Naive thymus-derived CD4-positive, alpha-beta T cell (primary cell): ENCODE measurements at regions of chr2 and their contacts with region 1.

Region 1: GRCh38 chr2:210002158-210003157 is at the start of gene RPE:
- DNase-seq: peak; percentile 93 to 97 (median 96)
- ATAC-seq: peak; percentile 100
- H3K4me3 ChIP-seq: peak within 1 kb of the TSS; percentile 98
- H3K4me3 Mint-ChIP-seq: peak within 1 kb of the TSS; percentile 88 to 97 (median 95)
- H3K27ac ChIP-seq: peak within 1 kb of the TSS; percentile 81
- H3K27ac Mint-ChIP-seq: peak within 1 kb of the TSS; percentile 85 to 99 (median 95)
- H3K4me1 ChIP-seq: peaks cover 20 to 34% of the 10 kb centered on the region in 2 donors
- H3K4me1 Mint-ChIP-seq: peaks cover 42 to 81% (median 64%) of the 10 kb centered on the region in 7 donors
- H3K27me3 ChIP-seq: no peaks in the 10 kb centered on the region
- H3K27me3 Mint-ChIP-seq: no peaks in the 10 kb centered on the region
- total RNA-seq, gene RPE: 15.9 to 47.3 (median 40.8) TPM

Region 2: GRCh38 chr2:208025037-208025813 is 1977.2 kb before region 1 on chr2 and contains the start of gene PLEKHM3:
- CTCF ChIA-PET with region 1: no interaction called
- POLR2A ChIA-PET with region 1: no interaction called
- intact Hi-C with region 1: loop called in 1 of 2 experiments (anchors 5 kb)
- DNase-seq: peak; percentile 12 to 80 (median 62)
- ATAC-seq: peak; percentile 93
- H3K4me3 ChIP-seq: peak within 1 kb of the TSS; percentile 88
- H3K4me3 Mint-ChIP-seq: peak within 1 kb of the TSS; percentile 85 to 100 (median 96)
- H3K27ac ChIP-seq: peak within 1 kb of the TSS; percentile 76
- H3K27ac Mint-ChIP-seq: peak within 1 kb of the TSS; percentile 89 to 98 (median 94)
- H3K4me1 ChIP-seq: peaks cover 0 to 4% of the 10 kb centered on the region in 2 donors
- H3K4me1 Mint-ChIP-seq: peaks cover 12 to 34% (median 27%) of the 10 kb centered on the region in 7 donors
- H3K27me3 ChIP-seq: no peaks in the 10 kb centered on the region
- H3K27me3 Mint-ChIP-seq: no peaks in the 10 kb centered on the region
- total RNA-seq, gene PLEKHM3: 6.1 to 19.4 (median 15.5) TPM

Region 3: DNA sequence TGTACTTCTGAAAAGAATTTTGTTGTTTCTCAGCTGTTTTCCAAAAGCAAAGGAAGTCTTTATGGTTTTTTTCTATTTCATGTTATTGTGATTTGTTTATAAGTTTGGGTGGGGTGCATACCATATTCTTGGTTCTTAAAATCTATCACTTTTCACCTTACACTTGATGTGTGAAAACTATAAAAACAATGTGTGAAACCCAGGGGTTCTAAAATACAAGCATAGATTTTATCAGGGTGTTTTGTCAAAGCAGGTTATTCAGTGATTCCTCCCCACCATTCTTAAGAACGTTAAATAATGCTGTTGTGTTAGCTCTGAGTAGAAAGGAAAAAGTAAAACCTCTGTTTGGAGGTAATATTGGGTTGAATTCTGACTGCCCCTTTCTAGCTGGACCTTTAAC is 17.7 kb after region 1 on chr2:
- CTCF ChIA-PET with region 1: interaction called, 3 read pairs
- POLR2A ChIA-PET with region 1: no interaction called
- intact Hi-C with region 1: loop called in 1 of 2 experiments (anchors 2 kb)
- DNase-seq: no peak
- ATAC-seq: peak; percentile 31
- H3K4me3 ChIP-seq: no peak overlapping the region
- H3K4me3 Mint-ChIP-seq: no peak overlapping the region
- H3K27ac ChIP-seq: no peak overlapping the region
- H3K27ac Mint-ChIP-seq: peak overlapping the region in 1 of 9 donors; percentile 26
- H3K4me1 ChIP-seq: peaks cover 0 to under 1% of the 10 kb centered on the region in 2 donors
- H3K4me1 Mint-ChIP-seq: peaks cover 0 to 5% (median 0%) of the 10 kb centered on the region in 7 donors
- H3K27me3 ChIP-seq: no peaks in the 10 kb centered on the region
- H3K27me3 Mint-ChIP-seq: no peaks in the 10 kb centered on the region

Region 4: DNA sequence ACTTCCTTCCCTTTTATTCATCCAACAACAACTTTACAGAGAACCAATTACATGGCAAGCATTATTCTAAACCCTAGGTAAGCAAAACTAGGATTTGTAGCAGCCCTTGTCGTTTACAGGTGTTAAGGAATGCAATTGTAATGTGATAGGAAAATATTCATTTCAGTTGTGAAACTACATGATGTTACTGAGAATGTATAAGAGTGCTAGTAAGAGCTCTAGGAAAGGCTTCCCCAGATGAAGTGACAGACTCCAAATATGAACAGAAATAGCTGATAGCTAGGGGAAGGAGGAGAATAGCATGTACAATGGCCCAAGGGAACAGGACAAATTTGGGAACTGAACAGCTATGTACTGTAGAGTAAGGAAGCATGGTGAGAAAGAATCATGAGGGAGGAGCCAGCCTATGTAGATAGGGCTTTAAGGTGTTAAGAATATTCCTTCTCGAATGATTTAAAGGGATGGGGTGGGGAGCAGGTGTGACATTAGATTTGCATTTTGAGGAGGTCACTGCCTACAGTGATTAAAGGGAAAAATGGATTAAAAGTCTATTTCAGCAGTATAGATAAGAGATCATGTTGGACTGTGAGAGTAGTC is 31.7 kb after region 1 on chr2:
- CTCF ChIA-PET with region 1: interaction called, 3 read pairs
- POLR2A ChIA-PET with region 1: interaction called, 3 read pairs
- intact Hi-C with region 1: loop called in 1 of 2 experiments (anchors 2 kb)
- DNase-seq: no peak
- ATAC-seq: no peak
- H3K4me3 ChIP-seq: no peak overlapping the region
- H3K4me3 Mint-ChIP-seq: no peak overlapping the region
- H3K27ac ChIP-seq: no peak overlapping the region
- H3K27ac Mint-ChIP-seq: peak overlapping the region in 1 of 9 donors; percentile 3
- H3K4me1 ChIP-seq: no peaks in the 10 kb centered on the region
- H3K4me1 Mint-ChIP-seq: peaks cover 0 to 9% (median 0%) of the 10 kb centered on the region in 7 donors
- H3K27me3 ChIP-seq: no peaks in the 10 kb centered on the region
- H3K27me3 Mint-ChIP-seq: no peaks in the 10 kb centered on the region

Region 5: GRCh38 chr2:210171309-210172203 is 169.1 kb after region 1 on chr2 and contains the start of gene KANSL1L:
- CTCF ChIA-PET with region 1: no interaction called
- POLR2A ChIA-PET with region 1: interaction called, 3 read pairs
- intact Hi-C with region 1: loop called (anchors 1 kb)
- DNase-seq: peak; percentile 92 to 99 (median 94)
- ATAC-seq: peak; percentile 95
- H3K4me3 ChIP-seq: peak within 1 kb of the TSS; percentile 89
- H3K4me3 Mint-ChIP-seq: peak within 1 kb of the TSS; percentile 90 to 100 (median 98)
- H3K27ac ChIP-seq: peak within 1 kb of the TSS; percentile 93
- H3K27ac Mint-ChIP-seq: peak within 1 kb of the TSS; percentile 93 to 99 (median 96)
- H3K4me1 ChIP-seq: peaks cover 6 to 7% of the 10 kb centered on the region in 2 donors
- H3K4me1 Mint-ChIP-seq: peaks cover 17 to 42% (median 33%) of the 10 kb centered on the region in 7 donors
- H3K27me3 ChIP-seq: no peaks in the 10 kb centered on the region
- H3K27me3 Mint-ChIP-seq: peaks cover 0 to 41% (median 0%) of the 10 kb centered on the region in 5 donors
- total RNA-seq, gene KANSL1L: 6.3 to 23.3 (median 13.3) TPM

Region 6: GRCh38 chr2:210412660-210413059 is 410.2 kb after region 1 on chr2:
- CTCF ChIA-PET with region 1: no interaction called
- POLR2A ChIA-PET with region 1: no interaction called
- intact Hi-C with region 1: no loop called
- DNase-seq: no peak
- ATAC-seq: no peak
- H3K4me3 ChIP-seq: no peak overlapping the region
- H3K4me3 Mint-ChIP-seq: no peak overlapping the region
- H3K27ac ChIP-seq: no peak overlapping the region
- H3K27ac Mint-ChIP-seq: no peak overlapping the region
- H3K4me1 ChIP-seq: no peaks in the 10 kb centered on the region
- H3K4me1 Mint-ChIP-seq: peaks cover 0 to 5% (median 0%) of the 10 kb centered on the region in 7 donors
- H3K27me3 ChIP-seq: no peaks in the 10 kb centered on the region
- H3K27me3 Mint-ChIP-seq: peaks cover 0 to 19% (median 11%) of the 10 kb centered on the region in 5 donors

Region 7: GRCh38 chr2:210476194-210477128 is 474.0 kb after region 1 on chr2 and contains the start of gene LANCL1:
- CTCF ChIA-PET with region 1: no interaction called
- POLR2A ChIA-PET with region 1: no interaction called
- intact Hi-C with region 1: loop called (anchors 1 to 2 kb)
- DNase-seq: peak; percentile 56 to 80 (median 74)
- ATAC-seq: peak; percentile 99
- H3K4me3 ChIP-seq: peak within 1 kb of the TSS; percentile 93
- H3K4me3 Mint-ChIP-seq: peak within 1 kb of the TSS; percentile 97 to 100 (median 100)
- H3K27ac ChIP-seq: peak within 1 kb of the TSS; percentile 81
- H3K27ac Mint-ChIP-seq: peak within 1 kb of the TSS; percentile 97 to 100 (median 99)
- H3K4me1 ChIP-seq: peaks cover 16 to 20% of the 10 kb centered on the region in 2 donors
- H3K4me1 Mint-ChIP-seq: peaks cover 38 to 86% (median 71%) of the 10 kb centered on the region in 7 donors
- H3K27me3 ChIP-seq: no peaks in the 10 kb centered on the region
- H3K27me3 Mint-ChIP-seq: no peaks in the 10 kb centered on the region
- total RNA-seq, gene LANCL1: 18.2 to 37.3 (median 31.5) TPM